Activated CD8-positive, alpha-beta memory T cell treated with anti-CD3 and anti-CD28 coated beads, Interleukin-2, amount 10 ng/mL, durations not matched to agents 7 days and 5 days (primary cell): ENCODE measurements at regions of chr1 and their contacts with region 1.

Region 1: DNA sequence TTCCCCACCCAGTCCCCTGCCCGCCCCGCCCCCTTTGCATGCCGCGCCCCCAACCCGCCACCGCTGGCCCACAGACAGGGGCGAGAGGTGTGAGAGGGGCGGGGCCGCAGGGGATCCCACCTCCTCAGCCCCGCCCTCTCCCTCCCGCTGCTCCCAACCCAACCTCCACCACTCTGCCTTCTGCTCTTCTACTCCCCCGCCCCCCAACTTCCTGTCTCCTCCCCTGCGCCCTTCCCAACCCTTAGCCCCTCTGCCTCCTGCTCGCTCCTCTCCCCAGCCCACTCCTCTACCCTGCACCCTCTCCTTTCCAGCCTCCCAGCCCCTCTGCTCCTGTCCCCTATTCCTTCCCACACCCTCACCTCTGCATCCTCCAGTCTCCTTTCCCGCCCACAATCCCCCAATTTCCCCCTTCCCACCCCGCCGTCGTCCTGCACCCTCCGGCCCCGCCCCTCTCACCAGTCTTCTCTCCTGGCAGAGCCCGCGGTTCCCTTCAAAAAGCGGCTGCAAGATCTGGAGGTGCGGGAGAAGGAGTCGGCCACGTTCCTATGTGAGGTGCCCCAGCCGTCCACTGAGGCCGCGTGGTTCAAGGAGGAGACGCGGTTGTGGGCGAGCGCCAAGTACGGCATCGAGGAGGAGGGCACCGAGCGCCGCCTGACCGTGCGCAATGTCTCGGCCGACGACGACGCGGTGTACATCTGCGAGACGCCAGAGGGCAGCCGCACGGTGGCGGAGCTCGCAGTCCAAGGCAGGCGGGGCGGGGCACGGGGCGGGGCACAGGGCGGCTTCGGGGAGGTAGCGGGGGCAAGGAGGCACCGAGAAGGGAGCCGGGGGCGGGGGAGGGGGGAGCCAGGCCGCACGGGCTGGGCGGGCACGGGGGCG is 5.4 kb downstream of the OBSCN start:
- DNase-seq: peak; percentile 94
- ATAC-seq: peak; percentile 96
- H3K4me3 Mint-ChIP-seq: peak overlapping the region; percentile 75
- H3K27ac Mint-ChIP-seq: peak overlapping the region; percentile 70
- H3K4me1 Mint-ChIP-seq: peaks cover 2% of the 10 kb centered on the region
- H3K27me3 Mint-ChIP-seq: no peaks in the 10 kb centered on the region

Region 2: GRCh38 chr1:228160201-228160761 is 52.9 kb before region 1 on chr1:
- CTCF ChIA-PET with region 1: no interaction called
- DNase-seq: no peak
- ATAC-seq: no peak
- H3K4me3 Mint-ChIP-seq: no peak overlapping the region
- H3K27ac Mint-ChIP-seq: no peak overlapping the region
- H3K4me1 Mint-ChIP-seq: peaks cover 40% of the 10 kb centered on the region
- H3K27me3 Mint-ChIP-seq: no peaks in the 10 kb centered on the region

Region 3: DNA sequence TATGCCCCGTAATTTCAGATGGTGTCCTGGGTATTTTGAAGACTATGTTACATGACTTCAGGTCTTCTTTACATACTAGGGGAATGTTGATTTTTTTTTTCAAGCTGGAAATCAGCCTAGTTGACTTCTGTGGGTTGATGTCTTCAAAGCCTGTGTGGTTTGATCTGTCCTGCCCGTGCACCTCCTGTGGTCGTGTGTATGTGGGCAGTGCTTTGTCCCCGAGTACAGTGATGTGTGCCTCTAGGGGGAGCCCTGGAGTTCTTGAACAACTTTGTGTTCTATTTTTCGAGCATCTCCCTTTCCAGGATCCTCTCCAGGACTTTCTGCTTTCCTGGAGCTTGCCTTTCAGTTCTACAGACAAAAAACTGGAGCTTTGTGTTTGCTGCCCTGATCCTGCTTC is 23.5 kb after region 1 on chr1:
- CTCF ChIA-PET with region 1: no interaction called
- DNase-seq: no peak
- ATAC-seq: no peak
- H3K4me3 Mint-ChIP-seq: no peak overlapping the region
- H3K27ac Mint-ChIP-seq: no peak overlapping the region
- H3K4me1 Mint-ChIP-seq: no peaks in the 10 kb centered on the region
- H3K27me3 Mint-ChIP-seq: no peaks in the 10 kb centered on the region

Region 4: DNA sequence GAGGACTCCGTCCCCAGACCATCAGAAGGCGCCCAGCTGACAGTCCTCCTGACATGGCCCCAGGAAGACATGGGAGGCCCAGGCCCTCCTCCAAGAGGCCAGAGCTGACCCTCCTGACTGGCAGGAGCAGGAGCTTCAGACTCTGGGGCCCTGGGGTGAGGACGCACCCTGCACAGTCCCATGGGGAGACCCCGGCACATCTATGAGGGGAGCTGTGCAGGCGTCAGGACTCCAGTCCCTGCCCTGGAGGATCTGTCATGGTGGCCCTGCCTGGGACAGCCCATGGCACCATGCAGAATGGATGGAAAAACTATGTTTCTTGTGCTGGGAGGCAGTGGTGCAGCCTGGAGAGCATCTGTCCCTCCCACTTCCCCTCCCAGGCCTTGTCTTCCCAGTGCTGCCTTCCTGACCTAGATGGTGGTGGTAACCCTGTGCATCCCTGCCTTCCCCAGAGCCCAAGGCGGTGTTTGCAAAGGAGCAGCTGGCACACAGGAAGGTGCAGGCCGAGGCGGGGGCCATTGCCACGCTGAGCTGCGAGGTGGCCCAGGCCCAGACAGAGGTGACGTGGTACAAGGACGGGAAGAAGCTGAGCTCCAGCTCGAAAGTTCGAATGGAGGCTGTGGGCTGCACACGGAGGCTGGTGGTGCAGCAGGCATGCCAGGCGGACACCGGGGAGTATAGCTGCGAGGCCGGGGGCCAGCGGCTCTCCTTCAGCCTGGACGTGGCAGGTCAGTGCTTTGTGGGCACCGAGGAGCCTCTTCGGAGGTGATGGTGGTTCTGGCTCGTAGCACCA is 36.5 kb after region 1 on chr1:
- CTCF ChIA-PET with region 1: no interaction called
- DNase-seq: no peak
- ATAC-seq: no peak
- H3K4me3 Mint-ChIP-seq: no peak overlapping the region
- H3K27ac Mint-ChIP-seq: no peak overlapping the region
- H3K4me1 Mint-ChIP-seq: no peaks in the 10 kb centered on the region
- H3K27me3 Mint-ChIP-seq: no peaks in the 10 kb centered on the region

Region 5: DNA sequence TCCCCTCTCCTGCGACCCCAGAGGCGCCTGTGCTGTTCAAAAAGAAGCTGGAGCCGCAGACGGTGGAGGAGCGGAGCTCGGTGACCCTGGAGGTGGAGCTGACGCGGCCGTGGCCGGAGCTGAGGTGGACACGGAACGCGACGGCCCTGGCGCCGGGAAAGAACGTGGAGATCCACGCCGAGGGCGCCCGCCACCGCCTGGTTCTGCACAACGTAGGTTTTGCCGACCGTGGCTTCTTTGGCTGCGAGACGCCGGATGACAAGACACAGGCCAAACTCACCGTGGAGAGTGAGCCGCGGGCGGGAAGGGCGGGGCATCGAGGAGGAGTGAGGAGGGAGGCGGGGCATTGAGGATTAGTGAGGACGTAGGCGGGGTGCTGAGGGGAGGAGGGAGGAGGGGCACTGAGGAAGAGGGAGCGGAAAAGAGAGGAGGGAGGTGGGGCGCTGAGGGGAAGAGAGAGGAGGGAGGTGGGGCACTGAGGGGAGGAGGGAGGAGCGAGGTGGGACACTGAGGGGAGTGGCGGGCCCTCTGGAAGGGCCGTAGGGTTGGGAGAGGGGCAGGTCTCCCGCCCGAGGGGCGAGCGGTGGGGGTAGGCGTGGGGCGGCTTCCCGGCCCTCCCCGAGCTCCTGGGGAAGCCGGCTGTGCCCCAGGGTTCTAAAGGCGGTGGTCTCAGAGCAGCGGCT is 62.7 kb after region 1 on chr1:
- CTCF ChIA-PET with region 1: interaction called, 10 read pairs
- DNase-seq: peak; percentile 95
- ATAC-seq: peak; percentile 96
- H3K4me3 Mint-ChIP-seq: peak overlapping the region; percentile 66
- H3K27ac Mint-ChIP-seq: peak overlapping the region; percentile 57
- H3K4me1 Mint-ChIP-seq: peaks cover 4% of the 10 kb centered on the region
- H3K27me3 Mint-ChIP-seq: no peaks in the 10 kb centered on the region